Activated CD4-positive, alpha-beta T cell treated with anti-CD3 and anti-CD28 coated beads for 36 hours (primary cell): ENCODE measurements at regions of chr10 and their contacts with region 1.

Region 1: DNA sequence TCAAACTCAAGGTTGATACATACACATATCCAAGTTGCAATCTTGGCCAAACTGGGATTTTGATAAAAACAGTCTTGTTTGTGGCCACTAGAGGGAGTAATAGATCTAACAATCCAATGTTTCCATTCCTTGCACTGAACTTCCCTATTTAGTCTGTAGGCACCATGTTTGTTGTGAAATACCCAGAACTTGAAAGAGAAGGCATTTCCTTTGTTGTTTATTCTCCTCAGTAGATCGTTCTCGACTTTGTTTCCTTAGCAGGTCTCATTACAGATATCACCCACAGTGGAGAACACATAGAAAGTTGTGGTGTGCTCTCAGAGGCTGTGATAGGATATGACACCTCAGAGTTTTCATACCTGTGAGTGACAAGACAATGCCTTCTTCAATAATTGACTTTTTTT is 70.3 kb upstream of the MXI1 start:
- DNase-seq: no peak
- ATAC-seq: peak; percentile 78
- H3K4me3 Mint-ChIP-seq: no peak overlapping the region
- H3K27ac Mint-ChIP-seq: peak overlapping the region; percentile 7
- H3K4me1 Mint-ChIP-seq: peaks cover 34% of the 10 kb centered on the region
- H3K27me3 Mint-ChIP-seq: no peaks in the 10 kb centered on the region

Region 2: DNA sequence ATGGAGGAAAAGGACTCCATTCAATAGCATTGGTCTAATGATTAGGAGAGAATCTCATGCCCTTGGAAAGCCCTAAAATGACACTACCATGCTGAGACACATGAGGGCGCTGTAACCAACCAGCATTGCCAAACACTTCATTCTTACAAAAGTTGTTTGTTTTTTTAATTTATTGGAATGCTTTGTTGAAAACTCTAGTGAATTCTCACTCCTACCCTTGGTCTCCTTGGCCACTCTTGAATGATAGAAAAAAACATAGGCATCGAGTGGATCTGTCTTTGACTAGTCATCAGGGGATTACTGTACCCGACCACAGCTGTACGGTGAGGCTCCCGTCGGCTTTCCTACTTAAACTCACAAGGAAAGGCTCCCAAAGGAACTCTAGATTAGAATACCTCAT is 158.7 kb before region 1 on chr10:
- CTCF ChIA-PET with region 1: interaction called, 6 read pairs
- POLR2A ChIA-PET with region 1: no interaction called
- intact Hi-C with region 1: loop called in 1 of 2 experiments (anchors 1 kb)
- DNase-seq: peak; percentile 79
- ATAC-seq: peak; percentile 75
- H3K4me3 Mint-ChIP-seq: no peak overlapping the region
- H3K27ac Mint-ChIP-seq: peak overlapping the region; percentile 6
- H3K4me1 Mint-ChIP-seq: peaks cover 9% of the 10 kb centered on the region
- H3K27me3 Mint-ChIP-seq: no peaks in the 10 kb centered on the region

Region 3: GRCh38 chr10:110110338-110110737 is 26.8 kb before region 1 on chr10:
- CTCF ChIA-PET with region 1: interaction called, 15 read pairs
- POLR2A ChIA-PET with region 1: no interaction called
- intact Hi-C with region 1: no loop called
- DNase-seq: peak; percentile 31
- ATAC-seq: peak; percentile 81
- H3K4me3 Mint-ChIP-seq: no peak overlapping the region
- H3K27ac Mint-ChIP-seq: peak overlapping the region; percentile 53
- H3K4me1 Mint-ChIP-seq: peaks cover 31% of the 10 kb centered on the region
- H3K27me3 Mint-ChIP-seq: no peaks in the 10 kb centered on the region

Region 4: GRCh38 chr10:110158051-110159005 is 21.2 kb after region 1 on chr10:
- CTCF ChIA-PET with region 1: interaction called, 13 read pairs
- POLR2A ChIA-PET with region 1: no interaction called
- intact Hi-C with region 1: no loop called
- DNase-seq: no peak
- ATAC-seq: no peak
- H3K4me3 Mint-ChIP-seq: no peak overlapping the region
- H3K27ac Mint-ChIP-seq: no peak overlapping the region
- H3K4me1 Mint-ChIP-seq: peaks cover 17% of the 10 kb centered on the region
- H3K27me3 Mint-ChIP-seq: peaks cover 69% of the 10 kb centered on the region

Region 5: DNA sequence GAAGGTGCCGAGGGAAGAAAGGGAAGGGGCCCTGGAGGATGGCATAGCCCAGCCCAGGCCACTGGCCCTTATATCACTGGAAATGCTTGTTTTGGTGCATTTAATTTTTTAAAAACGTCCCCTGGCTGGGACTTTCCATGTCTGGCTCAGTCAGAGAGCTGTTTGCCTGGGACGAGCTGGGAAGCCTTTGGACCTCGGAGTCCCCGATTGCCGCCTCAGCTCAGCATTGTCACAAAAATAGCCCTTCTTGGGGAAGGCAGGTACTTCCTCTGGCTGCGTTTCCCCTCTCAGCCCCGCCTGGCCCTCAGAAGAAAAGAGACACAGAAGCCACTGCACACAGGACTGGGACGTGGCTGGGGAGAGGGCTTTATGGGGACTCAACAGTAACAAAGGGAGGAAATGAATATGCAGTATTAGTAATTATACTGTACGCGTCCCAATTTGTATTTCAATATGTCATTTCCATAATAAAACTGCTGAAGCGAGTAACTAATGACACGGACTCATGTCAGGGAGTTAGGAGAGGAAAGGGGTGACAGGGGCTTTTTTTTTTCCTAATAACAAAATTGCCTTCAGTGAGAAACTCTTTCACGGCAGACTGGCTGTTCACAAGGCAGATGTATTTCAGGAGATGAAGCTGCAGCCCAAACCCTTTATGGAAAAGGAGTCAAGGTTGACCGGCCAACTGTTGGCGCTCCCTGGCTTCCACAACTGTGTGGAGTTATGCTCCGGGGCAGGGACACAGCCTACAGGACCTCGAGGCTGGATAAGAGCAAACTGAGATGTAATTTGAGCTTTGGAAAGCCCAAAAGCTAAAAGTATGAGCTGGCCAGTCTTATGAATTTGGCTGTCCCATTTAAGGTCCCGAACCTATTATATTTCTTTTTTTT is 39.2 kb after region 1 on chr10:
- CTCF ChIA-PET with region 1: no interaction called
- POLR2A ChIA-PET with region 1: no interaction called
- intact Hi-C with region 1: no loop called
- DNase-seq: no peak
- ATAC-seq: no peak
- H3K4me3 Mint-ChIP-seq: no peak overlapping the region
- H3K27ac Mint-ChIP-seq: no peak overlapping the region
- H3K4me1 Mint-ChIP-seq: no peaks in the 10 kb centered on the region
- H3K27me3 Mint-ChIP-seq: peaks cover 24% of the 10 kb centered on the region

Region 6: GRCh38 chr10:110273474-110273873 is 136.3 kb after region 1 on chr10:
- CTCF ChIA-PET with region 1: interaction called, 52 read pairs
- POLR2A ChIA-PET with region 1: no interaction called
- intact Hi-C with region 1: no loop called
- DNase-seq: peak; percentile 65
- ATAC-seq: peak; percentile 57
- H3K4me3 Mint-ChIP-seq: no peak overlapping the region
- H3K27ac Mint-ChIP-seq: peak overlapping the region; percentile 66
- H3K4me1 Mint-ChIP-seq: peaks cover 51% of the 10 kb centered on the region
- H3K27me3 Mint-ChIP-seq: no peaks in the 10 kb centered on the region

Region 7: GRCh38 chr10:110285501-110285900 is 148.4 kb after region 1 on chr10:
- CTCF ChIA-PET with region 1: interaction called, 52 read pairs
- POLR2A ChIA-PET with region 1: no interaction called
- intact Hi-C with region 1: no loop called
- DNase-seq: no peak
- ATAC-seq: no peak
- H3K4me3 Mint-ChIP-seq: no peak overlapping the region
- H3K27ac Mint-ChIP-seq: no peak overlapping the region
- H3K4me1 Mint-ChIP-seq: peaks cover 1% of the 10 kb centered on the region
- H3K27me3 Mint-ChIP-seq: no peaks in the 10 kb centered on the region

Region 8: DNA sequence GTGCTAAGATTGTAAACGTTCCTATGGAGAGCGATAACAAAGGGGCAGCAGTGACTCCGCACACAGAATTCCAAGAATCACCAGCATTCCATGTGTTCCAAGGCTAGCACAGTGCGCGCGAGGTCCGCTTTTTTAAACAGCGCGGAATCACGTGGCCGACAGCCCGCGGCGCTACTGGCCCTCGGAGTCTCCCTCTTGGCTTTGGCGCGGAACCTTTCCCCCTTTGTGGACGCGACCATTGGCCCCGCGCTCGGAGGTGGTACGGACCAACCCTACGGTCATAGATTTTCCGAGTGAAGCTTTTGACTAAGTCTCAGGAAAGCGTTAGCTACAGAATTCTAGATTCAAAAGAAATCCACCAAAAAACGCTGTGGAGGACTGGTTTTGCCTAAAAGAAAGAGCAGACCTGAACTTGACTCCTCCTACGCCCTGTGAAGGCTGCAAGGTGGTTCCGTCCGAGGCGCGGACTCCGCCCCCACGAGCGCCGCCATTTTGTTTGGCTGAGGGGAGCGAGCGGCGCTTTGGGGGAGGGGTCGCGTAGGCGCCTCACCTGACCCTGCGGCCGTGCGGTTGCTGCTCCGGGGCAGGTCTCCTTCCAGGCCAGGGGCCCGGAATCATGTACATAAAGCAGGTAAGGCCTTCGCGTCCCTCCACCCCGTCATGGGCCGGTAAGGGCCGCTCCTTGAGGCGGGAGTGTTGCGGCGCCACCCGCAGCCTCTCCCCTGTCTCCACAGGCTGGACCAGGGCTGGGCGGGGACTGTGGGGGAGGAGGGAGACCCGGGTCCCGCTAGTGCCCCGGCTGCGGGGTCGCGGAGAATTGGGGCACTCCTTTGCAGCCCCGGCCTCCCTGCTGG is 430.3 kb after region 1 on chr10 and contains the start of gene SMC3:
- CTCF ChIA-PET with region 1: no interaction called
- POLR2A ChIA-PET with region 1: no interaction called
- intact Hi-C with region 1: loop called in 1 of 2 experiments (anchors 5 kb)
- DNase-seq: peak; percentile 95
- ATAC-seq: peak; percentile 84
- H3K4me3 Mint-ChIP-seq: peak within 1 kb of the TSS; percentile 93
- H3K27ac Mint-ChIP-seq: peak within 1 kb of the TSS; percentile 99
- H3K4me1 Mint-ChIP-seq: peaks cover 35% of the 10 kb centered on the region
- H3K27me3 Mint-ChIP-seq: peaks cover 13% of the 10 kb centered on the region
- total RNA-seq, gene SMC3: 76.8 to 83.5 TPM